HepG2 (cell line): ENCODE measurements at regions of chr6 and their contacts with region 1.

Region 1: GRCh38 chr6:36131511-36132245 is 1.4 kb downstream of the MAPK13 start:
- DNase-seq: peak; percentile 84
- ATAC-seq: peak; percentile 22
- H3K4me3 ChIP-seq: peak overlapping the region; percentile 75 to 92 (median 75)
- H3K27ac ChIP-seq: peak overlapping the region; percentile 90
- H3K4me1 ChIP-seq: peaks cover 66% of the 10 kb centered on the region
- H3K27me3 ChIP-seq: no peaks in the 10 kb centered on the region
- CTCF ChIP-seq: no peak
- EP300 ChIP-seq: peak in 1 of 2 experiments; percentile 57; a peak in 1 of 4 replicates
- POLR2A ChIP-seq: no peak; a peak in 1 of 4 replicates
- RAD21 ChIP-seq: no peak

Region 2: GRCh38 chr6:35833536-35833935 is 298.1 kb before region 1 on chr6:
- CTCF ChIA-PET with region 1: no interaction called
- POLR2A ChIA-PET with region 1: no interaction called
- in situ Hi-C with region 1: no loop called
- intact Hi-C with region 1: no loop called
- DNase-seq: peak; percentile 24
- ATAC-seq: no peak
- H3K4me3 ChIP-seq: no peak overlapping the region
- H3K27ac ChIP-seq: no peak overlapping the region
- H3K4me1 ChIP-seq: peaks cover 16% of the 10 kb centered on the region
- H3K27me3 ChIP-seq: no peaks in the 10 kb centered on the region
- CTCF ChIP-seq: no peak
- EP300 ChIP-seq: no peak
- POLR2A ChIP-seq: no peak
- RAD21 ChIP-seq: no peak

Region 3: DNA sequence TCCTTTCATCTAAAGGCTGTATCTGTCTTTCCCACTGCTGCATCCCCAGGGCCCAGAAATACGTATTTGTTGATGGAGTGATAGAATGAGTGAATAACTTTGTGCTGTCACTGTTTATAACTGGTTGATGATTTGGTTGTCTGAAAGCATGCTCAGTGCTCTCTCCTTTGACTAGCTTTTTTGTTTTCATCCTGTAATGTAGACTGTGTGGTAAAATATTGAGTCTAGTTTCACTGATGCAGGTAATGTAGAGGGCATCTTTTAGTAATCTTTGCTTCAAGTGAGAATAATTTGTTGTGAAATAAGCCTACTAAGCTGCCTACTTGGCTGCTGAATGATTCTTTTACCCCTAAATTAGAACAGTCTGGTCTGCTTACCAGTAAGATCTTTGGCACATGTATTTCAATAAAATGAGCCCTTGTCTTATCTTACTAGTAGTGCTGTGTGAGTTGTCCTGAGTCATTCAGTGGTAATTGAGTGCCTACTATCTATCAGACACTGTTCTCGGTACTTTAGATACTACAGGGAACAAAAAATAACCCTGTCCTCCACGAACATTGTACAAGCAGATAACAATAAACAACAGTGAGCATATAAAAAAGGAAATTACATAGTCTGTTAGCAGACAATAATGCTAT is 64.2 kb before region 1 on chr6:
- CTCF ChIA-PET with region 1: no interaction called
- POLR2A ChIA-PET with region 1: interaction called, 17 read pairs
- in situ Hi-C with region 1: no loop called
- intact Hi-C with region 1: no loop called
- DNase-seq: no peak
- ATAC-seq: no peak
- H3K4me3 ChIP-seq: no peak overlapping the region
- H3K27ac ChIP-seq: peak overlapping the region; percentile 91
- H3K4me1 ChIP-seq: peaks cover 71% of the 10 kb centered on the region
- H3K27me3 ChIP-seq: no peaks in the 10 kb centered on the region
- CTCF ChIP-seq: no peak
- EP300 ChIP-seq: no peak
- POLR2A ChIP-seq: no peak
- RAD21 ChIP-seq: no peak

Region 4: GRCh38 chr6:36196880-36197548 is 65.3 kb after region 1 on chr6:
- CTCF ChIA-PET with region 1: no interaction called
- POLR2A ChIA-PET with region 1: interaction called, 27 read pairs
- in situ Hi-C with region 1: loop called (anchors 5 kb)
- intact Hi-C with region 1: loop called (anchors 2 kb)
- DNase-seq: peak; percentile 96
- ATAC-seq: peak; percentile 95
- H3K4me3 ChIP-seq: peak overlapping the region; percentile 65 to 90 (median 81)
- H3K27ac ChIP-seq: peak overlapping the region; percentile 92
- H3K4me1 ChIP-seq: peaks cover 22% of the 10 kb centered on the region
- H3K27me3 ChIP-seq: no peaks in the 10 kb centered on the region
- CTCF ChIP-seq: no peak
- EP300 ChIP-seq: no peak
- POLR2A ChIP-seq: peak; percentile 70 to 75
- RAD21 ChIP-seq: no peak

Region 5: DNA sequence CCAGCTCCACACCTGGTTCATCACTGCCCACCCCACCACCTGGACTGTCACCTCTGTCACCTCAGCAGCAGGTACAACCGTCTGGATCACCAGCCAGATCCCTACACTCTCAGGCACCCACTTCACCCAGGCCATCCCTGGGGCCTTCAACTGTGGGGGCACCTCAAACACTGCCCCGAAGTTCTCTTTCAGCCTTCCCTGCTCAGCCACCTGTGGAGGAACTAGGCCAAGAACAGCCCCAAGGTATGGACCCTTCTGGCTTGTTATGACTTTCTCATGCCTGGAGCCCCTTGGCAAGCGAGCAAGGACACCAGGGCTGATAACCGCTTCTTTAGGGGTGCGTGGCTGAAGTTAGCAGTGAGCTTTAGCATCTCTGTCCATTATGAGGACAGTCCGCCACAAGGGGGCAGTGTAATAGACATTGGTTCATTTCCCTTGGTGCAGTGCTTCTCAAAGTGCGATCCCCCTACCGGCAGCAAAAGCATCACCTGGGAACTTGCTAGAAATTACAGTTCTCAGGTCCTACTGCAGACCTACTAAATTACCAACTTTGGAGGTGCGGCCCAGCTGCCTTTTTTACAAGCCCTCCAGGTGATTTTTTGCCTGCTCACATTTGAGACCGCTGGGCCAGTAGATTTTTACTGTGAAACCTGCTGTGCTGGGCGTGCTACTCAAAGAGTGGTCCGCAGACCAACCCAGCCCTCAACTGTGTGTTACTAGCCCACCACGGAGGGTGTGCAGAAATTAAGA is 170.7 kb after region 1 on chr6:
- CTCF ChIA-PET with region 1: no interaction called
- POLR2A ChIA-PET with region 1: no interaction called
- in situ Hi-C with region 1: no loop called
- intact Hi-C with region 1: loop called (anchors 5 kb)
- DNase-seq: peak; percentile 93
- ATAC-seq: peak; percentile 96
- H3K4me3 ChIP-seq: no peak overlapping the region
- H3K27ac ChIP-seq: no peak overlapping the region
- H3K4me1 ChIP-seq: no peaks in the 10 kb centered on the region
- H3K27me3 ChIP-seq: peaks cover 0 to 10% of the 10 kb centered on the region in 2 experiments; a peak in 2 of 5 replicates
- CTCF ChIP-seq: peak; percentile 96
- EP300 ChIP-seq: no peak
- POLR2A ChIP-seq: no peak
- RAD21 ChIP-seq: peak; percentile 92